CD4-positive, alpha-beta memory T cell (primary cell): ENCODE measurements at regions of chr3 and their contacts with region 1.

Region 1: DNA sequence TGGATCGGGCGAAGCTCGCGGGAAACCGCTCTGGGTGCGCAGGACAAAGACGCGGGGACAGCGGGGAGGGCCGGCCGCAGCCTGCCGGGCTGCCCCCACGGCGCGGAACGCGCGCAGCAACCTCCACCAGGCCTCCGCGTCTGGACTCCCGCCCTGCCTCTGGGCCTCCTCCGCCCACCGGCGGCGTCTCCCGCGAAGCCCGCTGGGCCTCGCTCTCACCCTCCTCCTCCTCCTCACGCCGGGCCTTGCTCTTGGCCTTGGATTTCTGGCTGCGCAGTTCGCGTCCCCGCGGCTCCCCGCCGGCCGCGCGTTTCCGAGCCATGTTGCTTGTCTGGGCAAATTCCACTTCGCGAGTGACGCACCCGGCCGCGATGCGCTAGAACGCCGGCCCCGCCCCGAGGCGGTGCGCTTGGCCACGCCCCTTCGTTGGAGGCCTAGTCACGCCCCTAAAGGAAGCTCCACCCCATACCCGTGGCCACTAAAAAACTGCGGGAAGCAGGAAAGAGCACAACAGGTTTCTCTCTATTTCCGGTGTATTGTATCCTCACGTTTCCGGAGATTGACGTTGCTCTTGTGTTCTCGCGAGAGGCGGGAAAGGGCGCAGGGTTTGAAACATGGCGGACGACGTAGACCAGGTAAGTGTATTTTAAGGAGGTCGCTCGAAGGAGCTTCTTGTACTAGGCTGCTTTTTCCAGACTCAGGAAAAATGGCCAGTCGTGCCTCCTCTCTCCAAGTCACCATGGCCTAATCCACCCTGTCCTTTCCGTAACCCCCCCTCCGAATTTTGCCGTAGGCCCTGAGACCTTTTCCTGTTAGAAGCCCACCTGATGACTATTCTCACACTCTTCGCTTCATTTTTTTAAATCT is at the starts of genes LSM3 and XPC:
- DNase-seq: peak; percentile 97 to 100 (median 99)
- H3K4me3 ChIP-seq: peak within 1 kb of the TSS; percentile 78 to 81
- H3K4me3 Mint-ChIP-seq: peak within 1 kb of the TSS; percentile 92 to 99 (median 97)
- H3K27ac ChIP-seq: peak within 1 kb of the TSS; percentile 97
- H3K27ac Mint-ChIP-seq: peak within 1 kb of the TSS; percentile 93 to 100 (median 99)
- H3K4me1 ChIP-seq: peaks cover 57% of the 10 kb centered on the region
- H3K4me1 Mint-ChIP-seq: peaks cover 55 to 81% (median 63%) of the 10 kb centered on the region in 4 donors
- H3K27me3 ChIP-seq: no peaks in the 10 kb centered on the region
- H3K27me3 Mint-ChIP-seq: no peaks in the 10 kb centered on the region
- total RNA-seq, gene LSM3: 7.2 to 8.2 TPM
- total RNA-seq, gene XPC: 104 to 108 TPM

Region 2: DNA sequence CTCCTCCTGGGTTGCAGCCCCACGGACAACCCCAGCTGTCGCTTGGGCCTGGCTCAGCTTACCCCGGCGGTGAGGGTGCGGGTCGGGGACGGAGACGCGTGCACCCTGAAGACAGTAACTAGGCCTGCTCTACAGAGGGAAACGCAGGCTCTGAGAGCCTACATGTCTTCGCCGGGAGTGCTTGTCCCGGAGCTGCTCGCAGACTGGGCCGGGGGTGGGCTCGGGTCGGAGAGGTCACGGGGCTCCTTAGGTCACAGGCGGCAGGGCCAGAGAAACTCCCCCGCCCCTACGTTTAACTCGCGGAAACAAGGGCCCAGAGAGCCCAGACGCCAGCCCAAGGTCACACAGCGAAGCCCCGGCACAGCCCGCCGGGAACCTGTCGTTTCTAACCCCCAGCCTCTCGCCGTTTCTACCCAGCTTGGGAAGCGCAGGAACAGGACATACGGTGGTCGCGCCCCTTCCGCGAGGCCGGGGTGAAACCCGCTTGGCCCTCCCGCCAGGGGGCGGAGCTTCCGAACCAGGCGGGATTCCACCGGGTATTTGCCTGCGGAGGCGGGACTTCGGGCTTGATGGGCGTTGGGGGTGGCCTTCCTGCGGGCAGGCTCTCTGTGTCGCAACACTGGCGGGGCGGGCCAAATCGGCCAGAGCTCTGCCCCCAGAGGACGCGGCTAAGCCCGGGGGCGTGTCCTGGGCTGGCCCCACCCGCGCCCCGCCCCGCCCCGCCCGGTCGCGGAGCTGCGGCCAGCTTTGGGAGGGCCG is 698.7 kb before region 1 on chr3 and contains the start of gene HDAC11:
- CTCF ChIA-PET with region 1: no interaction called
- POLR2A ChIA-PET with region 1: interaction called, 4 read pairs
- intact Hi-C with region 1: loop called (anchors 5 kb)
- DNase-seq: peak; percentile 96 to 97 (median 96)
- H3K4me3 ChIP-seq: peak within 1 kb of the TSS; percentile 52 to 92
- H3K4me3 Mint-ChIP-seq: peak within 1 kb of the TSS; percentile 91 to 95 (median 94)
- H3K27ac ChIP-seq: peak within 1 kb of the TSS; percentile 90
- H3K27ac Mint-ChIP-seq: peak within 1 kb of the TSS; percentile 94 to 96 (median 96)
- H3K4me1 ChIP-seq: peaks cover 28% of the 10 kb centered on the region
- H3K4me1 Mint-ChIP-seq: peaks cover 6 to 35% (median 20%) of the 10 kb centered on the region in 4 donors
- H3K27me3 ChIP-seq: no peaks in the 10 kb centered on the region
- H3K27me3 Mint-ChIP-seq: peaks cover 0 to under 1% of the 10 kb centered on the region in 2 donors
- total RNA-seq, gene HDAC11: 7.1 to 7.6 TPM

Region 3: DNA sequence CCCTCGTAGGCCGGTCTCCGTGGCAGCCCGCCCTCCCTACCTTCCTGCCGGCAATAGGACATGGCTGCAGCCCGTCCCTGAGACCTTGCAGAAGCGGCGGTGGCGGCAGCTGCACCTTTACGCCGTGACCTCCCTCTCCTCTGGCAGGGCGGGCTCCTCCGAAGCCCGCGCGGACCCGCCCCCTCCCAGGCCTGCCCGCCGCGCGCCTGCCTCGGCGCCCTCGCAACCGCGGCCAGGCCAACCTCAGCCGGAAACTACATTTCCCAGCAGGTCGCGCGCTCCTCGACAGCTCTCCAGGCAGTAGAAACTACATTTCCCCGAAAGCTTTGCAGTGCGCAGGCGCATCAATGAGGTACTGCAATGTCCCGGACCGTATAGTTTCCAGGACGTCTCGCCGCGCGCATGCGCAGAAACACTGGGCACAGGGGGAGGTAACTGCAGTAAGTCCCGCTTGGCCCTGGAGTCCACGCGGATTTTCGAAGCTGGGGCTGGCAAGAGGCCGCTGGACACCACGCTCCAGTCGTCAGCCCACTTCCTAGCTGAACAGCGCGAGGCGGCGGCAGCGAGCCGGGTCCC is 53.8 kb before region 1 on chr3 and contains the starts of genes CHCHD4 and TMEM43:
- CTCF ChIA-PET with region 1: interaction called, 21 read pairs
- POLR2A ChIA-PET with region 1: interaction called, 270 read pairs
- intact Hi-C with region 1: loop called (anchors 1 kb)
- DNase-seq: peak; percentile 97 to 99 (median 99)
- H3K4me3 ChIP-seq: peak within 1 kb of the TSS; percentile 53 to 78
- H3K4me3 Mint-ChIP-seq: peak within 1 kb of the TSS; percentile 95 to 98 (median 96)
- H3K27ac ChIP-seq: peak within 1 kb of the TSS; percentile 89
- H3K27ac Mint-ChIP-seq: peak within 1 kb of the TSS; percentile 96 to 97 (median 97)
- H3K4me1 ChIP-seq: peaks cover 38% of the 10 kb centered on the region
- H3K4me1 Mint-ChIP-seq: peaks cover 38 to 64% (median 54%) of the 10 kb centered on the region in 4 donors
- H3K27me3 ChIP-seq: no peaks in the 10 kb centered on the region
- H3K27me3 Mint-ChIP-seq: no peaks in the 10 kb centered on the region
- total RNA-seq, gene CHCHD4: 7.5 to 9.3 TPM
- total RNA-seq, gene TMEM43: 69.3 to 69.7 TPM

Region 4: DNA sequence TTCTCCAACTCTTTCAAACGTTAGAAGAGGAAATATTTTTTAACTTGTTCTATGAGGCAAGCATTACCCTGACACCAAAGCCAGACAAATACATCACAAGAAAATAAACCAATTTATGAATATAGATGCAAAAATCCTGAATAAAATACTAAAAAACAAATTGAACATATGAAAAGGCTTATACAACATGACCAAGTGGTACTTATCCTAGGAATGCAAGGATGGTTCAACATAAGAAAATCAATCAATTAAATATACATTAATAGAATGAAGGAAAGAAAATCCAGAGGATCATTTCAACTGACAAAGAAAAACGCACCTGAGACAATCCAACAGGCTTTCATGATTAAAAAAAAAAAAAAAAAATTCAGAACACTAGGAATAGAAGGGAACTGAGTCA is 17.2 kb before region 1 on chr3:
- CTCF ChIA-PET with region 1: no interaction called
- POLR2A ChIA-PET with region 1: interaction called, 8 read pairs
- intact Hi-C with region 1: loop called (anchors 2 kb)
- DNase-seq: no peak
- H3K4me3 ChIP-seq: no peak overlapping the region
- H3K4me3 Mint-ChIP-seq: no peak overlapping the region
- H3K27ac ChIP-seq: no peak overlapping the region
- H3K27ac Mint-ChIP-seq: no peak overlapping the region
- H3K4me1 ChIP-seq: no peaks in the 10 kb centered on the region
- H3K4me1 Mint-ChIP-seq: peaks cover 10 to 31% (median 15%) of the 10 kb centered on the region in 4 donors
- H3K27me3 ChIP-seq: no peaks in the 10 kb centered on the region
- H3K27me3 Mint-ChIP-seq: no peaks in the 10 kb centered on the region

Region 5: GRCh38 chr3:14278799-14279625 is 100.5 kb after region 1 on chr3:
- CTCF ChIA-PET with region 1: no interaction called
- POLR2A ChIA-PET with region 1: no interaction called
- intact Hi-C with region 1: no loop called
- DNase-seq: no peak
- H3K4me3 ChIP-seq: no peak overlapping the region
- H3K4me3 Mint-ChIP-seq: no peak overlapping the region
- H3K27ac ChIP-seq: no peak overlapping the region
- H3K27ac Mint-ChIP-seq: peak overlapping the region in 1 of 7 donors; percentile 29
- H3K4me1 ChIP-seq: no peaks in the 10 kb centered on the region
- H3K4me1 Mint-ChIP-seq: no peaks in the 10 kb centered on the region
- H3K27me3 ChIP-seq: no peaks in the 10 kb centered on the region
- H3K27me3 Mint-ChIP-seq: peaks cover 0 to 2% of the 10 kb centered on the region in 2 donors

Region 6: GRCh38 chr3:14402304-14402811 is 223.9 kb after region 1 on chr3 and contains the start of gene SLC6A6:
- CTCF ChIA-PET with region 1: no interaction called
- POLR2A ChIA-PET with region 1: interaction called, 10 read pairs
- intact Hi-C with region 1: loop called (anchors 1 kb)
- DNase-seq: peak; percentile 93 to 96 (median 95)
- H3K4me3 ChIP-seq: peak within 1 kb of the TSS; percentile 62 to 100
- H3K4me3 Mint-ChIP-seq: peak within 1 kb of the TSS; percentile 96 to 100 (median 97)
- H3K27ac ChIP-seq: peak within 1 kb of the TSS; percentile 83
- H3K27ac Mint-ChIP-seq: peak within 1 kb of the TSS; percentile 96 to 100 (median 98)
- H3K4me1 ChIP-seq: peaks cover 51% of the 10 kb centered on the region
- H3K4me1 Mint-ChIP-seq: peaks cover 31 to 70% (median 45%) of the 10 kb centered on the region in 4 donors
- H3K27me3 ChIP-seq: no peaks in the 10 kb centered on the region
- H3K27me3 Mint-ChIP-seq: no peaks in the 10 kb centered on the region
- total RNA-seq, gene SLC6A6: 50.6 to 51.8 TPM

Region 7: GRCh38 chr3:14947886-14948555 is 769.5 kb after region 1 on chr3:
- CTCF ChIA-PET with region 1: no interaction called
- POLR2A ChIA-PET with region 1: interaction called, 8 read pairs
- intact Hi-C with region 1: loop called (anchors 1 kb)
- DNase-seq: peak; percentile 95 to 99 (median 96)
- H3K4me3 ChIP-seq: peak overlapping the region; percentile 63 to 83
- H3K4me3 Mint-ChIP-seq: peak overlapping the region; percentile 98 to 100 (median 100)
- H3K27ac ChIP-seq: peak overlapping the region; percentile 97
- H3K27ac Mint-ChIP-seq: peak overlapping the region; percentile 99 to 100 (median 100)
- H3K4me1 ChIP-seq: peaks cover 44% of the 10 kb centered on the region
- H3K4me1 Mint-ChIP-seq: peaks cover 27 to 71% (median 48%) of the 10 kb centered on the region in 4 donors
- H3K27me3 ChIP-seq: no peaks in the 10 kb centered on the region
- H3K27me3 Mint-ChIP-seq: no peaks in the 10 kb centered on the region